ENCODE measurements at regions of chr11 and their contacts with region 1.

Region 1: GRCh38 chr11:46392421-46393230 is 1.1 kb upstream of the CHRM4 start:
- DNase-seq: peak; percentile 78
- H3K4me3 ChIP-seq: peak overlapping the region; percentile 21 to 47
- H3K27ac ChIP-seq: no peak overlapping the region
- H3K4me1 ChIP-seq: peaks cover 9% of the 10 kb centered on the region
- H3K27me3 ChIP-seq: peaks cover 6% of the 10 kb centered on the region
- CTCF ChIP-seq: peak in 1 of 4 experiments; percentile 13
- POLR2A ChIP-seq: no peak

Region 2: GRCh38 chr11:46537537-46538295 is 145.1 kb after region 1 on chr11:
- intact Hi-C with region 1: loop called (anchors 5 kb)
- DNase-seq: peak; percentile 70
- H3K4me3 ChIP-seq: no peak overlapping the region
- H3K27ac ChIP-seq: no peak overlapping the region
- H3K4me1 ChIP-seq: no peaks in the 10 kb centered on the region
- H3K27me3 ChIP-seq: no peaks in the 10 kb centered on the region
- CTCF ChIP-seq: peak; percentile 58 to 83 (median 80)
- POLR2A ChIP-seq: no peak

Region 3: GRCh38 chr11:46616998-46617675 is 224.5 kb after region 1 on chr11 and contains the starts of genes ATG13 and HARBI1:
- intact Hi-C with region 1: loop called (anchors 5 kb)
- DNase-seq: peak; percentile 81
- H3K4me3 ChIP-seq: peak within 1 kb of the TSS; percentile 84 to 96
- H3K27ac ChIP-seq: peak within 1 kb of the TSS; percentile 92 to 95
- H3K4me1 ChIP-seq: no peaks in the 10 kb centered on the region
- H3K27me3 ChIP-seq: no peaks in the 10 kb centered on the region
- CTCF ChIP-seq: no peak
- POLR2A ChIP-seq: peak; percentile 58
- total RNA-seq, gene ATG13: 54.3 to 172 TPM
- total RNA-seq, gene HARBI1: 3.1 to 4.1 TPM